ENCODE measurements at regions of chr20 and their contacts with region 1.

Region 1: DNA sequence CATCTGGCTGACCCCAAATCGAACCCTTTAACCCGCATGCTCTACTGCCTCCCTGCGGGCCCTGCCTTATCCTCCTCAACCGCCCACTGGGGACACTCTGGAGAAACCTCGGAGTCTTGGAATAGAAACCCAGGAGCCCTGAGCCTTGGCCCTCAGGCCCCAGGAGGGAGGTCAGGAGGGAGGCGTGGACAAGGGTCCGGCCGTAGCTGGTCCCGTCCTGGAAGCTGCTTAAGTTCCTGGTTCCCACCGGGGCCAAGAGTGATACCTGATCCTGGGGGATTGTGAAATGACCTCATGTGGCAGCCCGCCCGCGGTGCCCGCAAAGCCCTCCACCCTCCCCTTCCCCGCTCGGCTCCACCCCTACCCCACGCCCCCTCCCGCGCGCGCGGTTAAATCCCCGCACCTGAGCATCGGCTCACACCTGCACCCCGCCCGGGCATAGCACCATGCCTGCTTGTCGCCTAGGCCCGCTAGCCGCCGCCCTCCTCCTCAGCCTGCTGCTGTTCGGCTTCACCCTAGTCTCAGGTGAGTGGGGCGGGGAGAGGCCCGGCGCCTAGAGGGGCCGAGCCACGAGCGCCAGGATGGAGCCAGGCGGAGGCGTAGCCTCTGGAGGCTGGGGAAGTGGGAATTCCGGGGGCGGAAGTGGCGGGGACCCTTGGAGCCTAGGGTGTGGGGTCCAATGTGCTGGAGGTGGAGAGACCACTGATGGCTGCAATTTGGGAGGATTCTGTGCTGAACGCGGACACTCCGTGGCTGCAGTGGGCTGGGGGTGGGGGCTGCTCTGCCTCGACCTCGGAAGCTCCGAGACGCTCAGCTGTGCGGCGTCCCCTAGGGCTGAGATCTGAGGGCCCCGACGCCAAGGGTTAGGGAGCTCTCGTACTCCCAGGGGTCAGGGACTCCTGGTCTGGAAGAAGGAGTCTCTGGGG is at the start of gene WFDC2:
- DNase-seq: peak; percentile 74 to 77
- H3K4me3 ChIP-seq: peak within 1 kb of the TSS; percentile 14 to 46 (median 35)
- H3K27ac ChIP-seq: peak within 1 kb of the TSS; percentile 83 to 90 (median 89)
- H3K4me1 ChIP-seq: peaks cover 18 to 31% of the 10 kb centered on the region in 2 donors
- H3K27me3 ChIP-seq: no peaks in the 10 kb centered on the region
- CTCF ChIP-seq: peak in 2 of 6 experiments; percentile 28 to 34
- POLR2A ChIP-seq: peak in 1 of 2 donors; percentile 1
- total RNA-seq, gene WFDC2: 109 to 163 (median 131) TPM

Region 2: DNA sequence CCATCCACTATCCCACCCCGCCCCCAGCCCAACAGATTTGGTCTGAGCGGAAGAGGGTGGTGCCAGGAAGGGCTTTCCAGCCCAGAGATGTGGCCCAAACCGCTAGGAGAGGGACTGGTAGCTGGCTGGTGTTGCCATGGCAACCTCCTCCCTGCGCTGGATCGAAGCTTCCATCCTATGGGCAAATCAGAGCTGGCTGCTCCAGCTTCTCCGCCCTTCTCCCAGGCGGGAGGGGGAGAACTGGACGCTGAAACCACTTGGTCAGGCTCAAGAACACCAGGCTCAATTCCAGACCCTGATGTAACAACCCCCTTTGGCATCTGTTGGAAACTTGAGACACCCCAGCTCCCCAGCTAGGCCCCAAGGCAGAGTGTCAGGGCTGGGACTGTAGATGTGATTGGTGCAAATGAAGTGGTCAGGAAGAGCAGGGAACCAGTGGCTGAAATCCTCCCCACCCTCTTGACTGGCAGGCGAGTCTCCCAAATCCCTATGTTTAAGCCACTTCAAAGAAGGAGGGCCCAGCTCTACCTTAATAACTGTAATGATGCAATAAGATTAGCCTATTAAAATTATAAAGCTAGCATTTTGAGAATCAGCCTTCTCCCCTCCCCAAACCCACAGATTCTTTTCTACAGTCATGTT is 663.5 kb before region 1 on chr20:
- intact Hi-C with region 1: no loop called
- DNase-seq: peak; percentile 83 to 91
- H3K4me3 ChIP-seq: no peak overlapping the region
- H3K27ac ChIP-seq: no peak overlapping the region
- H3K4me1 ChIP-seq: peaks cover 0 to 11% of the 10 kb centered on the region in 2 donors
- H3K27me3 ChIP-seq: no peaks in the 10 kb centered on the region
- CTCF ChIP-seq: no peak
- POLR2A ChIP-seq: no peak

Region 3: DNA sequence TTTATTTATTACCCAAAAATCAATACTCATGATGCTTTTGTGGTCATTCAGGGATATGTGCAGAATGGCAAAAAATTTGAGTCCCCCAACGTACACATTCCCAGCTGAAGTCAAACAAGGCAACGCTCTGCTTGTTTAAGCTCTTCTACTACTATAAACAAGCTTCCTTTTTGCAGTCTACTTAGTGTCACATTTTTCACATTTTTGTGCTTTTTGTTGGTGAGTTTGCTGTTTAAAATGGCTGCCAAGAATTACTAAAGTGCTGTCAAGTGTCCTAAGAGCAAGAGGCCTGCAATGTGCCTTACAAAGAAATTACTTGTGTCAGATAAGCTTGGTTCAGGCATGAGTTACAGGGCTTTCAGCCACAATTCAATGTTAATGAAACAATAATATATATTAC is 107.4 kb after region 1 on chr20:
- intact Hi-C with region 1: no loop called
- DNase-seq: peak; percentile 22 to 23
- H3K4me3 ChIP-seq: no peak overlapping the region
- H3K27ac ChIP-seq: peak overlapping the region; percentile 64 to 71 (median 64)
- H3K4me1 ChIP-seq: peaks cover 13 to 21% of the 10 kb centered on the region in 2 donors
- H3K27me3 ChIP-seq: no peaks in the 10 kb centered on the region
- CTCF ChIP-seq: peak in 1 of 6 experiments; percentile 23
- POLR2A ChIP-seq: no peak

Region 4: DNA sequence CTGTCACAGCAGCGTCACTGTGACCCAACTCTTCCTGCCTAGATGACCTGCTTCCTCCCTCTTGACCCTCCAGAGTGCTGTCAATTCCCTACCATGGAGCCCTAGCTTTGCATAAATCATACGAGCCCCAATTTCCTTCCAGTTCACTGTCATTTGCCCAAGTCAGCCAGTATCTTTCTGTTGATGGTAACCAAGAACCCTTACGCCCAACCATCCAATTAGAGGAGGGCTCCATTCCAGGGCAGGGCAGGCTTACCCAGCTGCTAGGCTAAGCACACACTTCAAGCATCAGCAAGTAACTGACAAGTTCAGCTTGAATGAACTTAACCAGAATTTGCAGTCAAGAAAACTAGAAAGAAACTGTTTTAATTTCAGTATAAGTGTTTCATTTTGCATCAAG is 296.4 kb after region 1 on chr20:
- intact Hi-C with region 1: loop called (anchors 10 kb)
- DNase-seq: peak; percentile 49 to 57
- H3K4me3 ChIP-seq: no peak overlapping the region
- H3K27ac ChIP-seq: no peak overlapping the region
- H3K4me1 ChIP-seq: no peaks in the 10 kb centered on the region
- H3K27me3 ChIP-seq: no peaks in the 10 kb centered on the region
- CTCF ChIP-seq: no peak
- POLR2A ChIP-seq: no peak